ENCODE measurements at regions of chr5 and their contacts with region 1.

Region 1: GRCh38 chr5:134411546-134412266 is at the start of gene CDKN2AIPNL:
- DNase-seq: peak; percentile 89 to 92 (median 91)
- ATAC-seq: peak; percentile 99
- H3K4me3 ChIP-seq: peak within 1 kb of the TSS; percentile 84
- H3K27ac ChIP-seq: peak within 1 kb of the TSS; percentile 73
- H3K4me1 ChIP-seq: peaks cover 18 to 25% of the 10 kb centered on the region in 2 experiments
- H3K27me3 ChIP-seq: no peaks in the 10 kb centered on the region
- CTCF ChIP-seq: peak; percentile 67 to 92 (median 79)
- EP300 ChIP-seq: peak; percentile 41; the same call in 1 of the 2 replicates
- POLR2A ChIP-seq: peak; percentile 95
- RAD21 ChIP-seq: peak; percentile 49 to 60
- polyA plus RNA-seq, gene CDKN2AIPNL: 19.9 to 30.7 TPM

Region 2: DNA sequence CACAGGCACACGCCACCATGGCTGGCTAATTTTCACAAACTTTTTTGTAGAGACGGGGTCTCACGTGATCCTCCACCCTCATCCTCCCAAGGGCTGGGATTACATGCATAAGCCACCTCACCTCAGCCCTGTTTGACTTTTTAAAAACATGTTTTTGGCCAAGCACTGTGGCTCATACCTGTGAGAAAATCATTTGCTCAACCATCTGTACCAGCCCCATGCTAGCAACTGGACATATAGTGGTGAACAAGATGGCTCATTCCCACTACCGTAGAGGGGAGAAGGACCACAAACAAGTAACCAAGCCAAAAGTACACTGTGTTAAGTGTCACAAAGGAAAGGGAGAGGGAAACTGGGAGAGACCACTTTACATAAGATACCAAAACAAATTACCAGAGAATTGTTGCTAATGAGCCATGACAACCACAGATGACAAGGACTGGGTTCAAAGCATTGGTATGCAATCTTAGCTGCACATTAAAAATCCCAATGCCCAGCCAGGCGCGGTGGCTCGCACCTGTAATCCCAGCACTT is 205.0 kb before region 1 on chr5:
- CTCF ChIA-PET with region 1: no interaction called
- POLR2A ChIA-PET with region 1: no interaction called
- in situ Hi-C with region 1: no loop called
- intact Hi-C with region 1: no loop called
- DNase-seq: no peak
- ATAC-seq: no peak
- H3K4me3 ChIP-seq: no peak overlapping the region
- H3K27ac ChIP-seq: no peak overlapping the region; the same call in 2 of the 3 replicates
- H3K4me1 ChIP-seq: no peaks in the 10 kb centered on the region
- H3K27me3 ChIP-seq: no peaks in the 10 kb centered on the region
- CTCF ChIP-seq: no peak
- EP300 ChIP-seq: no peak
- POLR2A ChIP-seq: no peak
- RAD21 ChIP-seq: no peak

Region 3: GRCh38 chr5:134394932-134395331 is 16.8 kb before region 1 on chr5:
- CTCF ChIA-PET with region 1: no interaction called
- POLR2A ChIA-PET with region 1: interaction called, 18 read pairs
- in situ Hi-C with region 1: no loop called
- intact Hi-C with region 1: no loop called
- DNase-seq: no peak
- ATAC-seq: no peak
- H3K4me3 ChIP-seq: no peak overlapping the region
- H3K27ac ChIP-seq: no peak overlapping the region
- H3K4me1 ChIP-seq: no peaks in the 10 kb centered on the region
- H3K27me3 ChIP-seq: no peaks in the 10 kb centered on the region
- CTCF ChIP-seq: no peak
- EP300 ChIP-seq: no peak
- POLR2A ChIP-seq: no peak
- RAD21 ChIP-seq: no peak

Region 4: DNA sequence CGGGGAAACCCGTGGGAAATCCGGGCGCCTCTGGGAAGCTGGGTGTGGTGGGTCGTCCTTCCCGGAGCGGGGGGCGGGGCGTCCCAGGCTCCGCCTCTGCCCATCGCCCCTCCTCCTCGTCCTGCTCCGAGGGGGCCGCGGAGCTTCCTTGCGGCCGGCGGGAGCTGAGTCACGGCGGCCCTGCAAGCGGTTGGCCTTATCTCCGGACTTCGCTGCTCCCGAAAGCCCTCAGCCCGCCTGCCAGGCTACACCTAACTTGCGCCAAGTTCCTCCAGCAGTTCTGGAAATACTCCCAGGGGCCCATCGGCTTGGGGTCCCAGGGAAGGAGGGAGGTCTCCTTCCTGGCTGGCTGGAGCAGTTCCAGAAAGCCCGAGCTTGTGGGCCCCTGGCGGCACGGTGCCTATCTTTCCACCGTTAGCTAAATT is 54.1 kb after region 1 on chr5:
- CTCF ChIA-PET with region 1: no interaction called
- POLR2A ChIA-PET with region 1: interaction called, 4 read pairs
- in situ Hi-C with region 1: no loop called
- intact Hi-C with region 1: loop called (anchors 5 kb)
- DNase-seq: peak; percentile 93 to 98 (median 96)
- ATAC-seq: peak; percentile 91
- H3K4me3 ChIP-seq: peak overlapping the region; percentile 46
- H3K27ac ChIP-seq: peak overlapping the region; percentile 99
- H3K4me1 ChIP-seq: peaks cover 32 to 34% of the 10 kb centered on the region in 2 experiments
- H3K27me3 ChIP-seq: no peaks in the 10 kb centered on the region
- CTCF ChIP-seq: no peak
- EP300 ChIP-seq: peak; percentile 89
- POLR2A ChIP-seq: peak; percentile 85
- RAD21 ChIP-seq: no peak; a peak in 1 of 4 replicates

Region 5: GRCh38 chr5:134511788-134512650 is 100.3 kb after region 1 on chr5:
- CTCF ChIA-PET with region 1: interaction called, 3 read pairs
- POLR2A ChIA-PET with region 1: interaction called, 4 read pairs
- in situ Hi-C with region 1: loop called (anchors 5 kb)
- intact Hi-C with region 1: loop called (anchors 5 kb)
- DNase-seq: peak; percentile 37 to 72 (median 50)
- ATAC-seq: peak; percentile 91
- H3K4me3 ChIP-seq: no peak overlapping the region
- H3K27ac ChIP-seq: peak overlapping the region; percentile 57; the same call in 2 of the 3 replicates
- H3K4me1 ChIP-seq: peaks cover 28 to 35% of the 10 kb centered on the region in 2 experiments
- H3K27me3 ChIP-seq: no peaks in the 10 kb centered on the region
- CTCF ChIP-seq: peak; percentile 45 to 55 (median 45); a peak in 4 of 6 replicates
- EP300 ChIP-seq: no peak
- POLR2A ChIP-seq: no peak
- RAD21 ChIP-seq: peak; percentile 51 to 70

Region 6: DNA sequence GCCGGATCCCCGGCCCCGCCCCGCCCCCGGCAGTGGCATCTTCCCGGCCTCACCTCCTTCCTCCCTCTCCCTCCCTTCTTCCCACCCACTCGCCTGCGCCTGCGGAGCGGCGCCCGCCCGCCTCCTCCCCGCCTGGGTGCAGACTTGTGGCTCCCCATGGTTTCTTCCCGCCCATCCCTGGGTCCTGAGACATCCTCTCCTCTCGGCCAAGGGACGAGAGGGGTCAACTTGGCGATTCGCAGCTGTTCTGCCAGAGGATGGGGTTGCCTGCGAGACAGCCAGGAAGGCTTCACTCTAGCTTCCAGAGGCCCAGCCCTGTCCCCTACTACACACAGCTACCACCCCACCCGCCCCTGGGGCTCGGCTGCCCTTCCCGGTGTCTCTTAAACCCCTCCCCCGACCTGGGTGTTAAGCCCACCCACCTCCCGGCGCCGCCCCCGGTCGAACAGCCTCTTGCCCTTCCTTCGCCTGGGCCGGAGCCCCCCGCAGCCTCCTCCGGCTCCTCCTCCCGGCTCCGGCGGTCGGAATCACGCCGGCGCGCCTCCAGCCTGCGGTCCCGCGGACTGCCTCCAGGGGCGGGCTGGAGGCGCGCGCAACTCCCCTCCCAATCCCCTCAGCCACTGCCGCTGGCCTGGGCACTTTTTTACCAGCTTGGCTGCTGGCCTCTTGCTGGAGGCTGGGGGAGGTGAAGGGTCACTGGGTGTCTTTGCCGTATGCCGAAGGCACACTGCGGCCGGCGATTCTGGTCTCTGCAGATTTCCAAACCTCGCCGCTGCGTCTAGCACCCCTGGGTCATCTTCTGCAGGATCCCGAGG is 115.6 kb after region 1 on chr5:
- CTCF ChIA-PET with region 1: interaction called, 5 read pairs
- POLR2A ChIA-PET with region 1: interaction called, 4 read pairs
- in situ Hi-C with region 1: no loop called
- intact Hi-C with region 1: loop called (anchors 2 kb)
- DNase-seq: peak; percentile 86 to 90 (median 88)
- ATAC-seq: peak; percentile 77
- H3K4me3 ChIP-seq: peak overlapping the region; percentile 80
- H3K27ac ChIP-seq: peak overlapping the region; percentile 87; the same call in 2 of the 3 replicates
- H3K4me1 ChIP-seq: peaks cover 10 to 43% of the 10 kb centered on the region in 2 experiments; a peak in 3 of 5 replicates
- H3K27me3 ChIP-seq: no peaks in the 10 kb centered on the region
- CTCF ChIP-seq: peak; percentile 77 to 89 (median 80)
- EP300 ChIP-seq: no peak
- POLR2A ChIP-seq: no peak; the same call in 1 of the 2 replicates
- RAD21 ChIP-seq: peak; percentile 35 to 44; a peak in 2 of 4 replicates

Region 7: GRCh38 chr5:134577796-134578363 is 166.2 kb after region 1 on chr5:
- CTCF ChIA-PET with region 1: no interaction called
- POLR2A ChIA-PET with region 1: no interaction called
- in situ Hi-C with region 1: no loop called
- intact Hi-C with region 1: loop called (anchors 5 kb)
- DNase-seq: peak; percentile 77 to 85 (median 80)
- ATAC-seq: peak; percentile 93
- H3K4me3 ChIP-seq: no peak overlapping the region
- H3K27ac ChIP-seq: no peak overlapping the region
- H3K4me1 ChIP-seq: peaks cover 0 to 15% of the 10 kb centered on the region in 2 experiments; a peak in 1 of 5 replicates
- H3K27me3 ChIP-seq: no peaks in the 10 kb centered on the region
- CTCF ChIP-seq: peak; percentile 83 to 94 (median 89)
- EP300 ChIP-seq: no peak
- POLR2A ChIP-seq: no peak
- RAD21 ChIP-seq: peak; percentile 74 to 95

Region 8: GRCh38 chr5:134714120-134714519 is 302.4 kb after region 1 on chr5:
- CTCF ChIA-PET with region 1: no interaction called
- POLR2A ChIA-PET with region 1: no interaction called
- in situ Hi-C with region 1: no loop called
- intact Hi-C with region 1: no loop called
- DNase-seq: peak in 1 of 4 experiments; percentile 24
- ATAC-seq: no peak; the same call in 2 of the 3 replicates
- H3K4me3 ChIP-seq: no peak overlapping the region
- H3K27ac ChIP-seq: no peak overlapping the region; the same call in 2 of the 3 replicates
- H3K4me1 ChIP-seq: peaks cover 0 to 3% of the 10 kb centered on the region in 2 experiments; a peak in 2 of 5 replicates
- H3K27me3 ChIP-seq: no peaks in the 10 kb centered on the region
- CTCF ChIP-seq: no peak
- EP300 ChIP-seq: no peak
- POLR2A ChIP-seq: no peak
- RAD21 ChIP-seq: no peak